ENCODE measurements at regions of chr3 and their contacts with region 1.

Region 1: DNA sequence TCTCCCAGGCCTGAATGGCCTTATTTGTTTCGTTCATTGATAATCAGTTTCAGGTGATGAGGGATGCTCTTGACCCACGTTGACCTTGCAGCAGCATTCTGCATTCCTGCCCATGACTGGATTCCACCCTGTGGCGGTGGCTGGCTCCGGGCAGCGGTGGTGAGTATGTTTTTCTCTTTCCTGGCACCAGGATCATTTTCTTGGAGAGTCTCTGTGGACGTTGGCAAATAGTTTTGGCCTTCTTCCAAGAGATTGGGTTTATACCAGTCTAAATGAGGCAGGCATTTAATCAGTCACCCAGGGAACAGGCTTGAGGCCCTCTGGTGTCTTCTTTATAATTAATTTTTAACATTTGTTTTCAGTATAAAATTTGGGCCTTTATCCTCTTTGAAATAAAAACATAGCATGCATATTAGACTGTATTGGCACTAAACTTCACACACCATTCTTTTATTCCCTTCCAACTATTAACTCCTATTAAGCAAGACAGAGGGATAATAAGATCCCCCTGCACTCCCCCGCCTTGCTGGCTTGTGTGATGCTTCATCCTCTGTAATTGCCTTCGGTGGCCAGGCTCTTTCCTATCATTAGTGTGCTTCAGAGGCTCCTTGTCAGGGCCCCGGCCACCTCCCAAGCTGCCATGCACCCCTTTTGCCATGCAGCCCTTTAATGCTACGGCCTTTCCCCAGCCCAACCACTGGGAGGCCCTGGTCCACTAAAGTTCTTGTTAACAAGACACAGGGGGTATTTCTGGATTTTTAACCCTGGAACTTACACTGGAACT is 176.2 kb upstream of the TOPAZ1 start:
- DNase-seq: no peak
- ATAC-seq: peak; percentile 71
- H3K4me3 ChIP-seq: no peak overlapping the region
- H3K27ac ChIP-seq: no peak overlapping the region
- H3K4me1 ChIP-seq: no peaks in the 10 kb centered on the region
- H3K27me3 ChIP-seq: no peaks in the 10 kb centered on the region

Region 2: GRCh38 chr3:43855674-43856299 is 209.7 kb before region 1 on chr3:
- intact Hi-C with region 1: loop called in 1 of 2 experiments (anchors 5 kb)
- DNase-seq: peak in 1 of 2 donors; percentile 77
- ATAC-seq: peak; percentile 71
- H3K4me3 ChIP-seq: no peak overlapping the region
- H3K27ac ChIP-seq: no peak overlapping the region
- H3K4me1 ChIP-seq: no peaks in the 10 kb centered on the region
- H3K27me3 ChIP-seq: no peaks in the 10 kb centered on the region

Region 3: DNA sequence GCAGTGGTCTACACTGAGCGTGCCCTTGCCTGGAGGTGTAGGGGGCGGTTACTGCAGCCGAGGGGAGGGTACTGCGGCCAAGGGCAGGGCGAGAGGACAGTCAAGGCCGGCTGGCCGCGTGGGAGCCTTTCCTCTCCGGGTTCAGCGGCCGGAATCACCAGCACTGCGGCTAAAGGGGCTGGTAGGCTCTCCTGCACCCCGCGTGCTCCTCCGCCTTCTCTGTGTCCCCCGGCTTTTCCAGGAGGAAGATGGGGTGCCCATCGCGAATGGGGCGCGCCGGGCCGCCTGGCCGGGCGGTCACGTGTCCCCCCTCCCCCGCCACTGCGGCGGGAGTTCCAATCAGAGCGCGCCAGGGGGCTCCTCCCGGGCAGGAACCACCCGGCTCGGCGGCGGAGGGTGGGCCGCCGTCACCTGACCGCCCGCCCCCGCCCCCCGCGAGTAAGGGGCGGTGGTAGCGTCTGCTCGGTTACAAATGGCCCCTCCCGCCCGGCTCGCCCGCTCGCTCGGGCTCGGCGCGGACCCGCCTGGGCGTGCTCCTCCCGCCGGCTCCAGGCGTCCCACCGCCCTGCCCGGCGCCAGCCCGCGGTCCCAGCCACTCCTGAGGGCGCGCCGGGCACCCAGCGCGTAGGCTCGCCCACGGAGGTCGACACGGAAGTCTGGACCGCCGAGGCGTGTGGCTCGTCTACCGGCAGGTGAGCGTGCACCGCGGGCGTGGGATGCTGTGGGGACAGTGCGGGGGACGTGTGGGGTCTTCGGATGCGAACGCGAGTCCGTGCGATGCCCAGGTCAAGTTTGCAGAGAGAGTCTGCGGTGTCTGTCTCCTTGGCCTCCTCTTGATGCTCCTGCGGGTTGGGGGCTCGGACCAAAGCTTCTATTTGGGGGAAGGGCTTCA is 66.4 kb before region 1 on chr3:
- intact Hi-C with region 1: loop called in 1 of 2 experiments (anchors 5 kb)
- DNase-seq: peak in 1 of 2 donors; percentile 74
- ATAC-seq: peak; percentile 28
- H3K4me3 ChIP-seq: peak overlapping the region; percentile 20 to 55
- H3K27ac ChIP-seq: no peak overlapping the region
- H3K4me1 ChIP-seq: no peaks in the 10 kb centered on the region
- H3K27me3 ChIP-seq: no peaks in the 10 kb centered on the region